Activated CD8-positive, alpha-beta T cell treated with anti-CD3 and anti-CD28 coated beads for 36 hours (primary cell): ENCODE measurements at regions of chr19 and their contacts with region 1.

Region 1: GRCh38 chr19:39412100-39412866 is at the start of gene PLEKHG2:
- DNase-seq: peak; percentile 98
- ATAC-seq: peak; percentile 74
- H3K4me3 Mint-ChIP-seq: peak within 1 kb of the TSS; percentile 79
- H3K27ac Mint-ChIP-seq: peak within 1 kb of the TSS; percentile 89
- H3K4me1 Mint-ChIP-seq: peaks cover 29% of the 10 kb centered on the region
- H3K27me3 Mint-ChIP-seq: peaks cover 2% of the 10 kb centered on the region
- CTCF ChIP-seq: peak; percentile 85
- total RNA-seq, gene PLEKHG2: 35.9 to 42.8 TPM

Region 2: GRCh38 chr19:39277612-39278011 is 134.7 kb before region 1 on chr19:
- CTCF ChIA-PET with region 1: no interaction called
- POLR2A ChIA-PET with region 1: no interaction called
- intact Hi-C with region 1: no loop called
- DNase-seq: no peak
- ATAC-seq: no peak
- H3K4me3 Mint-ChIP-seq: no peak overlapping the region
- H3K27ac Mint-ChIP-seq: no peak overlapping the region
- H3K4me1 Mint-ChIP-seq: no peaks in the 10 kb centered on the region
- H3K27me3 Mint-ChIP-seq: no peaks in the 10 kb centered on the region
- CTCF ChIP-seq: no peak

Region 3: DNA sequence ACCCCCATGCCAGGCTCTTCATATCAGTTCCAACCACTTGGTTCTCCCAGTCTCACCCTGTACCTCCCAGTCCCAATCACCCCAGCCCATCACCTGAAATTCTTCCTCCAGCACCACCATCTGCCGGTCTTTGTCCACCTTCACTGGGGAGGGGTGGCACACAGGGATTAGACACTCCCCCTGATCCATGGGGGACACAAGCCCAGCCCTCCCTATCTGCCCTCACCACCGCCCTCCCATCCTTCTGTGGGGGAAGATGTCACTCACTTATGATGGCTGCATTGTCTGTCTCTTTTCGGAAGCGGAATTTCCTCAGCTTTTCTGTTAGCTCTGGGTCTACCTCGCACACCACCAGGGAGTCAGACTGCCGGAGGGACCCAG is 77.1 kb before region 1 on chr19:
- CTCF ChIA-PET with region 1: interaction called, 6 read pairs
- POLR2A ChIA-PET with region 1: interaction called, 8 read pairs
- intact Hi-C with region 1: loop called (anchors 5 kb)
- DNase-seq: peak; percentile 63
- ATAC-seq: peak; percentile 40
- H3K4me3 Mint-ChIP-seq: peak overlapping the region; percentile 97
- H3K27ac Mint-ChIP-seq: peak overlapping the region; percentile 99
- H3K4me1 Mint-ChIP-seq: peaks cover 52% of the 10 kb centered on the region
- H3K27me3 Mint-ChIP-seq: no peaks in the 10 kb centered on the region
- CTCF ChIP-seq: no peak

Region 4: GRCh38 chr19:39390755-39391592 is 21.3 kb before region 1 on chr19 and contains the starts of genes MED29 and PAF1:
- CTCF ChIA-PET with region 1: interaction called, 153 read pairs
- POLR2A ChIA-PET with region 1: interaction called, 80 read pairs
- intact Hi-C with region 1: no loop called
- DNase-seq: peak; percentile 98
- ATAC-seq: peak; percentile 94
- H3K4me3 Mint-ChIP-seq: peak within 1 kb of the TSS; percentile 97
- H3K27ac Mint-ChIP-seq: peak within 1 kb of the TSS; percentile 99
- H3K4me1 Mint-ChIP-seq: peaks cover 37% of the 10 kb centered on the region
- H3K27me3 Mint-ChIP-seq: no peaks in the 10 kb centered on the region
- CTCF ChIP-seq: no peak
- total RNA-seq, gene MED29: 19.5 to 19.8 TPM
- total RNA-seq, gene PAF1: 35.5 to 36.5 TPM

Region 5: DNA sequence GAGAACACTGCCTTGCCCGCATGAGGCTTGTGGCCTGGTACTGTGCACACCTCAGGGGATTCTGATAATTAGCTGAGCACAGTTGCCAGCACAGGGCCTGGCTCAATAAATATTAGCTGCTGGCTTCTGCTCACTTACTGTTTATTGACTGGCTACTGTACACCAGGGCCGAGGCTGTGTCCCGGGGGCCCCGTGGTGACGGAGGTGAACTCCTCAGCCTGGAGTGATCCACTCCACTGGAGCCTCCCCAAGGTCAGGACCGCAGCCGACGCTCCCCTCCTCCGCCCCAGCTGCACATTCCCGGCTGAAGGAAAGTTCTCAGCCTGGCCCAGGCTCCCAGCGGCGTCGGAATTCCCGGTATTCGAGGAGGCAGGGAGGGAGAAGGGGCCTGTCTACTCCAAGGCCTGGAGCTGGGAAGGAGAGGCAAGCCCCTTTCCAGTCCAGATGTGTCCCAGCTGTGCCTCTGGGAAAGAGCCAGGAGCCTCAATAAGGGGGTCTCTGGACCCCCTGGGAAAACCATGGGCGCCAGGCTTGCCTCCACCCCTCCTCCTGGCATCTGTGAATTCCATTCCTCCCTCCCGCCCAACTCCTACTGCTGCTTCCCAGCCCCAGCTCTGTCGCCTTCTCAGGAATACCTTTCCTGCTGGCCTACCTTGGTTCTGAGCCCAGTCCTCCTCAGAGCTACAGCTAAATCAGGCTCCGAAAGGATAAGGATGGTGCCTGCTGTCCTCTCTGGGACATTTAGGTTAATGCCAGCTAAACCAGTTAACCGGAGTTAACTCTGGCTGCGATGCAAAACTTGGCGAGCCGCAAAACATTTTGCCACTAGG is 16.2 kb after region 1 on chr19:
- CTCF ChIA-PET with region 1: interaction called, 6 read pairs
- POLR2A ChIA-PET with region 1: interaction called, 66 read pairs
- intact Hi-C with region 1: no loop called
- DNase-seq: no peak
- ATAC-seq: no peak
- H3K4me3 Mint-ChIP-seq: no peak overlapping the region
- H3K27ac Mint-ChIP-seq: no peak overlapping the region
- H3K4me1 Mint-ChIP-seq: peaks cover 24% of the 10 kb centered on the region
- H3K27me3 Mint-ChIP-seq: no peaks in the 10 kb centered on the region
- CTCF ChIP-seq: no peak